ENCODE measurements at regions of chr14 and their contacts with region 1.

Region 1: GRCh38 chr14:34498684-34499412 is 36.8 kb upstream of the SPTSSA start:
- DNase-seq: no peak
- ATAC-seq: no peak
- H3K4me3 ChIP-seq: no peak overlapping the region
- H3K4me3 Mint-ChIP-seq: no peak overlapping the region
- H3K27ac ChIP-seq: no peak overlapping the region
- H3K27ac Mint-ChIP-seq: no peak overlapping the region
- H3K4me1 ChIP-seq: no peaks in the 10 kb centered on the region
- H3K4me1 Mint-ChIP-seq: no peaks in the 10 kb centered on the region
- H3K27me3 ChIP-seq: no peaks in the 10 kb centered on the region
- H3K27me3 Mint-ChIP-seq: no peaks in the 10 kb centered on the region
- CTCF ChIP-seq: no peak

Region 2: GRCh38 chr14:34262127-34262910 is 236.5 kb before region 1 on chr14:
- CTCF ChIA-PET with region 1: no interaction called
- POLR2A ChIA-PET with region 1: no interaction called
- intact Hi-C with region 1: no loop called
- DNase-seq: no peak
- ATAC-seq: no peak
- H3K4me3 ChIP-seq: no peak overlapping the region
- H3K4me3 Mint-ChIP-seq: no peak overlapping the region
- H3K27ac ChIP-seq: no peak overlapping the region
- H3K27ac Mint-ChIP-seq: no peak overlapping the region
- H3K4me1 ChIP-seq: no peaks in the 10 kb centered on the region
- H3K4me1 Mint-ChIP-seq: no peaks in the 10 kb centered on the region
- H3K27me3 ChIP-seq: no peaks in the 10 kb centered on the region
- H3K27me3 Mint-ChIP-seq: peaks cover 9% of the 10 kb centered on the region
- CTCF ChIP-seq: no peak

Region 3: GRCh38 chr14:34331728-34332623 is 166.9 kb before region 1 on chr14:
- CTCF ChIA-PET with region 1: interaction called, 3 read pairs
- POLR2A ChIA-PET with region 1: no interaction called
- intact Hi-C with region 1: loop called (anchors 2 kb)
- DNase-seq: peak; percentile 63
- ATAC-seq: peak; percentile 76
- H3K4me3 ChIP-seq: no peak overlapping the region
- H3K4me3 Mint-ChIP-seq: peak overlapping the region; percentile 53
- H3K27ac ChIP-seq: no peak overlapping the region
- H3K27ac Mint-ChIP-seq: peak overlapping the region; percentile 41
- H3K4me1 ChIP-seq: peaks cover 6 to 15% of the 10 kb centered on the region in 2 donors
- H3K4me1 Mint-ChIP-seq: peaks cover 28% of the 10 kb centered on the region
- H3K27me3 ChIP-seq: no peaks in the 10 kb centered on the region
- H3K27me3 Mint-ChIP-seq: peaks cover 3% of the 10 kb centered on the region
- CTCF ChIP-seq: peak; percentile 75

Region 4: GRCh38 chr14:34682787-34683321 is 184.0 kb after region 1 on chr14:
- CTCF ChIA-PET with region 1: no interaction called
- POLR2A ChIA-PET with region 1: no interaction called
- intact Hi-C with region 1: no loop called
- DNase-seq: no peak
- ATAC-seq: no peak
- H3K4me3 ChIP-seq: no peak overlapping the region
- H3K4me3 Mint-ChIP-seq: no peak overlapping the region
- H3K27ac ChIP-seq: no peak overlapping the region
- H3K27ac Mint-ChIP-seq: no peak overlapping the region
- H3K4me1 ChIP-seq: no peaks in the 10 kb centered on the region
- H3K4me1 Mint-ChIP-seq: no peaks in the 10 kb centered on the region
- H3K27me3 ChIP-seq: no peaks in the 10 kb centered on the region
- H3K27me3 Mint-ChIP-seq: peaks cover 12% of the 10 kb centered on the region
- CTCF ChIP-seq: no peak

Measured in B cell (primary cell).